Motor neuron (in vitro differentiated cells): ENCODE measurements at regions of chr7 and their contacts with region 1.

Region 1: GRCh38 chr7:14717816-14718215 is 184.7 kb downstream of the DGKB start:
- ATAC-seq: peak in 3 of 8 experiments; percentile 19 to 32 (median 26)
- H3K4me3 ChIP-seq: no peak overlapping the region
- H3K27ac ChIP-seq: no peak overlapping the region
- H3K4me1 ChIP-seq: no peaks in the 10 kb centered on the region

Region 2: DNA sequence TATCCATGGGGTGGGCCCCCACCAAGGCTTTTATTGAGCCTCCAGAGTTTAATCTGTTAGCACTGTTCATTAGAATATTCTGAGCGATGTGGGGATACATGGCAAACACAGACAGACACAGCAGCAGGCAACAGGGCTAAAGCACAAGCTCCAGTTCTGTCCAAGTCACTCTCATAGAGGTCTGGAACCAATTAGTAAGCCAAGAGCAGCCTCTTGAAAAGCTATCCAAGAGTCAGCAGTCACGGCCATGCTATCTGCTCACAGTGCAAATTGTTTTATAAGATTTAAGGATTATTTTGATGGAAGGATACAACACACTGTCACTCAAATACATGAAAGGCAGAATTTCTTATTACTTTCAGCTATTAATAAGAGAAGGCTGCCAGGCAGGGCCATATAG is 271.1 kb after region 1 on chr7:
- in situ Hi-C with region 1: loop called in 1 of 9 experiments (anchors 25 kb)
- ATAC-seq: peak in 3 of 8 experiments; percentile 62 to 86 (median 66)
- H3K4me3 ChIP-seq: no peak overlapping the region
- H3K27ac ChIP-seq: no peak overlapping the region
- H3K4me1 ChIP-seq: no peaks in the 10 kb centered on the region

Region 3: DNA sequence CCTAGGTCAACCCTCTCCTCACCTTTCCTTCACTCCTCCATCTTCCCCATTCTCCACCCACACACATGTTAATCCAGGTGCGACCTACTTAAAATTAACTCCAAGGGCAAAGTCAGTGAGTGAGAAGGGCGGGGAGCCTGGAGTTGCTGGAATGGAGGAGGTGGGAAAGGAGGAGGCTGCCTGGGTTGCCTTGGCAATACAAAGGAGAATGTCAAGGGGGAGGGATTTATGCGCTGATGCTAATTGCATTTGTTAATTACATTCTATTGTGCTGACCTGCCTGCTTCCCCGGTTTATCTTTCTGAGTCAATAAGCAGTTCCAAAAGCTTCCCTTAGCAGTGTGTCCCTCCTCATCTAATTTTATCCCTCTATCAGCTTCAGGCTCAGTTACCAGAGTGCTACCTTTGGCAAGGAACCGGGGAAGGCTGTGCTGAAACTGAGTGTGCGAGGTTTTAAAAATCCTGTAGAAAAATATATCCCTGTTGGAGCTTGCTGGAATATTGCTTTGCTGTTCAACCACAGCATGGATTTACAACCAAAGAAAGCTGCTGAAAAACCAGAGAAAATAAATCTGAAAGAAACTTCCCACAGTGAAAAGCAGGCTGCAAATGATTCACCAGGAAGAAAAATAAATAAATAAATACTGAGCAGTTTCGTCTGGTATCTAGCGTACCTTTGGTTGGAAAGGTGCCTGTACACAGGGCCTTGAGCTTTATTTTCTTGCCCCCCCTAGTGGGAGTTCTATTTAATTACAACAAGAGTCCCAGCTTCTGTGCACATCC is 297.9 kb after region 1 on chr7:
- in situ Hi-C with region 1: loop called in 5 of 9 experiments (anchors 10 to 25 kb)
- ATAC-seq: peak; percentile 62 to 95 (median 92)
- H3K4me3 ChIP-seq: peak overlapping the region; percentile 2 to 22 (median 14)
- H3K27ac ChIP-seq: no peak overlapping the region
- H3K4me1 ChIP-seq: peaks cover 5 to 6% of the 10 kb centered on the region in 2 donors

Region 4: DNA sequence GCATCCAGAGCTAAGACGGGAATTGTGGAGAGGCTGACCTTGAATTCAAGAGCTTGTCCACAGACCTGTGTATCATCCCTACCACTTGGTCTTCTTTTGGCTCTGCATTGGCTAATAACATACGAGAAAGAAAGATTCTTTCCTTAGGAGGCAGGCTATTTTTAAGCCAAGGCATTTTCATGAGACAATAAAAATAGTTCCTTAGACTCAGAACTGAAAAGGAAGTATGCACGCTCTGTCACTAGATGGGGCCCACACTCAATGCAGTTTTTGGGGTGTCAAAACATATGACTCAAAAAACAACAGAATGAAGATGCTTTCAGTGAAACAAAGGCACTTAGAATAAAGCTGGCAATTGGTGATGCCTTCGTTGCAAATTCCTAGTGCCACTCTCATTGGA is 450.7 kb after region 1 on chr7:
- in situ Hi-C with region 1: loop called in 1 of 9 experiments (anchors 25 kb)
- ATAC-seq: no peak
- H3K4me3 ChIP-seq: no peak overlapping the region
- H3K27ac ChIP-seq: no peak overlapping the region
- H3K4me1 ChIP-seq: no peaks in the 10 kb centered on the region

Region 5: GRCh38 chr7:15305002-15305600 is 587.3 kb after region 1 on chr7:
- in situ Hi-C with region 1: loop called in 1 of 9 experiments (anchors 25 kb)
- ATAC-seq: peak in 1 of 8 experiments; percentile 19
- H3K4me3 ChIP-seq: no peak overlapping the region
- H3K27ac ChIP-seq: no peak overlapping the region
- H3K4me1 ChIP-seq: no peaks in the 10 kb centered on the region

Region 6: DNA sequence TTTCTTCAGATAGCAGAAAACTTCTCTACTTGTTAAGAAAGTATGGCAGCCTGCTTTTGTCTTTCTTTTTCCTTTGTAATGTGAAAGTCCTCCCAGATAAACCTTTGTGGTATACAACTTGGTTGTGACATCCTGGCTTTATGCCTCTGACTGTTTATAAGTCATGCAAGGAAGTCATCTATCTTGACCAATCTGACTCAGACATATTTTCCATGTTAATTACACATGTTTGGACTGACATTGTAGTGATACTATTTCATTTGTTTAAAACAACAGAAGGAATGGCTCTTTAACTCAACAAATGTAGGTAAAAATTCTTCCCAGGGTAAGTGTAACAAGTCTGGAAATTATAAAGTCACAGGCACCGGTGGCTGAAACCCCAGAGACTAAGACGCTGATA is 1310.3 kb after region 1 on chr7:
- in situ Hi-C with region 1: loop called in 1 of 9 experiments (anchors 25 kb)
- ATAC-seq: peak in 2 of 8 experiments; percentile 73 to 80
- H3K4me3 ChIP-seq: no peak overlapping the region
- H3K27ac ChIP-seq: no peak overlapping the region
- H3K4me1 ChIP-seq: peaks cover 0 to 7% of the 10 kb centered on the region in 2 donors